ENCODE measurements at regions of chr18 and their contacts with region 1.

Region 1: GRCh38 chr18:22422909-22423548 is 5.3 kb upstream of the CTAGE1 start:
- DNase-seq: no peak
- H3K4me3 ChIP-seq: no peak overlapping the region
- H3K27ac ChIP-seq: peak overlapping the region; percentile 31
- H3K4me1 ChIP-seq: peaks cover 11% of the 10 kb centered on the region
- H3K27me3 ChIP-seq: no peaks in the 10 kb centered on the region
- CTCF ChIP-seq: no peak

Region 2: DNA sequence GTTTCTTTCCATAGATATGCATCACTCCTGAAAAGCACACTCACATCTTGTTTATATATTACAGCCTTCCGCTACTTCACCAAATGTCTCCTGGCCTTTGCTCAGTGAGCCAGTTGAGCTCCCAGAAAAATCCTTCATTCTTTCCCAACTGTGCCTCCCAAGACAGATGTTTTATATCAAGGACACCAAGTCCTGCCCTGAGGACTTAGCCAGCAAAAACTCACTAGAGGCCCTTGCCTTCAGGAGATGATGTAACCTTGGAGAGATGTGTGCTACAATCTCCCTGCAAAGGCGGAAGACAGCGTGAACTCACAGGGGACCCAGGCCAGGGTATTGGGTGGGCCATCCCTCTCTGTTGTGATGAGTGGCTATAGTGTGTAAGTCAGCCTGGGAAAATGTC is 80.8 kb after region 1 on chr18:
- intact Hi-C with region 1: loop called (anchors 10 kb)
- DNase-seq: peak; percentile 64
- H3K4me3 ChIP-seq: no peak overlapping the region
- H3K27ac ChIP-seq: peak overlapping the region; percentile 68
- H3K4me1 ChIP-seq: peaks cover 24% of the 10 kb centered on the region
- H3K27me3 ChIP-seq: no peaks in the 10 kb centered on the region
- CTCF ChIP-seq: no peak

Region 3: DNA sequence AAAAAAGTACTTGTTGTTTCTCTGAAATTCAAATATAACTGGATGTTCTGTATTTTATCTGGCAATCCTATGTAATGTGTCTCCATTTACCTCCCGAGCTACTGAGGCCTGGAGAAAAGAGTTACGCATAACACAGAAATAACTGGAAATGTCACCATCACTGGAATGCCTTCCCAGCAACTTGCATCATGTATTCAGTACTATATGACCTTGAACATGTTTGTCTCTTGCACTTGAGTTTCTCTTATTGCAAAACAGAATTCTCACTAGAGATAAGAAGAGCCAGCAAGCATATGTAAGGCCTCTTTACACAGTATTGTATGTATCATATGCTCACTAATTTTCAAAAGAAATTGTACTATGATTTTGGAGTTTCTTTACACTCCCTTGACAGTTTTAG is 94.3 kb after region 1 on chr18:
- intact Hi-C with region 1: no loop called
- DNase-seq: no peak
- H3K4me3 ChIP-seq: no peak overlapping the region
- H3K27ac ChIP-seq: no peak overlapping the region
- H3K4me1 ChIP-seq: peaks cover 32% of the 10 kb centered on the region
- H3K27me3 ChIP-seq: no peaks in the 10 kb centered on the region
- CTCF ChIP-seq: no peak

Measured in left ventricle myocardium inferior (tissue), 1 donor.